ENCODE measurements at regions of chr12 and their contacts with region 1.

Region 1: GRCh38 chr12:2583091-2583497 is 211.7 kb upstream of the FKBP4 start:
- DNase-seq: peak; percentile 75
- H3K4me3 ChIP-seq: no peak overlapping the region
- H3K27ac ChIP-seq: no peak overlapping the region
- H3K4me1 ChIP-seq: no peaks in the 10 kb centered on the region
- H3K27me3 ChIP-seq: no peaks in the 10 kb centered on the region
- CTCF ChIP-seq: peak; percentile 85

Region 2: GRCh38 chr12:2057041-2057794 is 525.9 kb before region 1 on chr12:
- intact Hi-C with region 1: loop called (anchors 10 kb)
- DNase-seq: peak; percentile 68
- H3K4me3 ChIP-seq: no peak overlapping the region
- H3K27ac ChIP-seq: no peak overlapping the region
- H3K4me1 ChIP-seq: no peaks in the 10 kb centered on the region
- H3K27me3 ChIP-seq: peaks cover 24% of the 10 kb centered on the region
- CTCF ChIP-seq: peak; percentile 80

Region 3: DNA sequence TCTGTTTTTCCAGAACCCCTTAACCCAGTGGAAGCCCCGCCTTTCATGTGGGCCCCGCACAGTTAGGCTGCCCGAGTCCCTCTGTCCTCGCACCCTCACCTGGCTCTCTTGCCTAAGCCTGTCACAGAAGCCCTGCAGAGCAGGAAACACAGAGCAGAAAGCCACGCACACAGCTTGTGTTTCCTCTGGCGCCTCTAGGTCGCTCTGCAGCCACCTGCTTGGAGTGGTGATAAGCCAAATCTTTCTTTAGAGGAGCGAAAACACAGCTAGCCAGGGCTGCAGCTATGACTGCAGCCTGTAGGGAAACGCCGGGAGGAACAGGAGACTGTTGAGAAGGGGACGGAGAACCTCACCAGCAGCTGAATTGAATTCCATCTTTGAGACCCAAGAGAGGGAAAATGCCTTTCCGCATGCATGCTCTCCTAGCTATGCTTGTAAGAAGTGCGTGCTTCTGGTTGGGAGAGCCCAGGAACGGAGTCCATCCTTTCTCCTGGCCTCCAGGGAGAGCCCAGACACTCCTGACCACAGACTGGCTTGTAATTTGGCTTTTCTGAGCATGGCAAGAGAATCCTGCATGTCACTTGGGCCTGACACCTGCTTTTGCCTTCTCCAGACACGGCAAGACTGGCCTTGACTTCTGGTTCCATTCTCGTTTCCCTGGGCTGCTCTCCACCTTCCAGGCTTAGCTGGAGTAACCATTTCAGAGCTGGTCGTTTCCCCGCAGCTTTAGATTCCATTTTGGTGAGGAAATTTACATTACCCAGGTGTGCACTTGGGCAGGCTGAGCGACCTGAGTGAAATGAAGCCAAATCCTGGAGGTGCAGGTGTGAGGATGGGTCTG is 228.7 kb before region 1 on chr12:
- intact Hi-C with region 1: no loop called
- DNase-seq: no peak
- H3K4me3 ChIP-seq: no peak overlapping the region
- H3K27ac ChIP-seq: no peak overlapping the region
- H3K4me1 ChIP-seq: no peaks in the 10 kb centered on the region
- H3K27me3 ChIP-seq: no peaks in the 10 kb centered on the region
- CTCF ChIP-seq: no peak